HepG2 (cell line): ENCODE measurements at regions of chr1 and their contacts with region 1.

Region 1: DNA sequence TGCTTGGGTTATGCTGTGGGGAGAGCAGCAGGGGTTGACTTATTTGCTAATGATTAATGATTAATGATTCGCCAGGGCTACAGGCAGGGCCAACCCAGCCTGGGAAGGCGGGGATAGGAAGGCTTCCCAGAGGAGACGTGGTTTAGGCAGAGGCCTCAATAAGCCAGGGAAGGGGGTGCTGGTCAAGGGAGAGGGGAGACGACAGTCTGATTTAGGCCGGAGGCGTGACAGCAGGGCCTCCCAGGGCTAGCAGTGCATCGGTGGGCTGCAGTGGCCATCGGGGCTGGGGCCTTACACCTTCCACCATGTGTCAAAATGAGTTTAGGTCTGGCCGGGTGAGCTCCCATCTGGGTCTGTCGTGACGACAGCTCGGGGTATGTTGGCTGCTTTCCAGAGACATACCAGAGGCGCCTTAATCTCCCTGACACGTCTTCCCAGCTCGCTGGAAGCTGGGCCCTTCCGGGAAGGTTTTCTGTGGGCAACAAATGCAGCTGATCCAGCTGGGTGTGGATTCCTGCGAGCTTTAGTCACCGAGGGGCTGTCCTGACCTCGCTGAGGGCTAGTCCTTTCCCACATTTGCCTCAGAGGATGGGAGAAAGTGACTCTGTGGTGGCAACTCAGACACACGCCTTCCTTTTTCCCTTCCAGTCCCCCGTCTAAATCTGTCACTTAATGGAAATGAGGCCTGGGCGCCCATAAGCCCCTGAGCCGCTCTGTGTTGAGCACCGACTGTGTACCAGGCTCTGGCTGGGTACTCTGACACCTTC is 3.7 kb upstream of the SLC1A7 start:
- DNase-seq: peak; percentile 85
- ATAC-seq: peak; percentile 97
- H3K4me3 ChIP-seq: peak overlapping the region; percentile 50 to 70 (median 57); a peak in 5 of 6 replicates
- H3K27ac ChIP-seq: peak overlapping the region; percentile 88
- H3K4me1 ChIP-seq: peaks cover 61% of the 10 kb centered on the region
- H3K27me3 ChIP-seq: peaks cover 0 to 2% of the 10 kb centered on the region in 2 experiments; a peak in 1 of 5 replicates
- CTCF ChIP-seq: peak; percentile 30; the same call in 1 of the 2 replicates
- EP300 ChIP-seq: peak in 1 of 2 experiments; percentile 23; a peak in 1 of 4 replicates
- POLR2A ChIP-seq: peak; percentile 61 to 91
- RAD21 ChIP-seq: 0 out of 2 replicates have a peak, but pooled peaks have one; percentile 36

Region 2: DNA sequence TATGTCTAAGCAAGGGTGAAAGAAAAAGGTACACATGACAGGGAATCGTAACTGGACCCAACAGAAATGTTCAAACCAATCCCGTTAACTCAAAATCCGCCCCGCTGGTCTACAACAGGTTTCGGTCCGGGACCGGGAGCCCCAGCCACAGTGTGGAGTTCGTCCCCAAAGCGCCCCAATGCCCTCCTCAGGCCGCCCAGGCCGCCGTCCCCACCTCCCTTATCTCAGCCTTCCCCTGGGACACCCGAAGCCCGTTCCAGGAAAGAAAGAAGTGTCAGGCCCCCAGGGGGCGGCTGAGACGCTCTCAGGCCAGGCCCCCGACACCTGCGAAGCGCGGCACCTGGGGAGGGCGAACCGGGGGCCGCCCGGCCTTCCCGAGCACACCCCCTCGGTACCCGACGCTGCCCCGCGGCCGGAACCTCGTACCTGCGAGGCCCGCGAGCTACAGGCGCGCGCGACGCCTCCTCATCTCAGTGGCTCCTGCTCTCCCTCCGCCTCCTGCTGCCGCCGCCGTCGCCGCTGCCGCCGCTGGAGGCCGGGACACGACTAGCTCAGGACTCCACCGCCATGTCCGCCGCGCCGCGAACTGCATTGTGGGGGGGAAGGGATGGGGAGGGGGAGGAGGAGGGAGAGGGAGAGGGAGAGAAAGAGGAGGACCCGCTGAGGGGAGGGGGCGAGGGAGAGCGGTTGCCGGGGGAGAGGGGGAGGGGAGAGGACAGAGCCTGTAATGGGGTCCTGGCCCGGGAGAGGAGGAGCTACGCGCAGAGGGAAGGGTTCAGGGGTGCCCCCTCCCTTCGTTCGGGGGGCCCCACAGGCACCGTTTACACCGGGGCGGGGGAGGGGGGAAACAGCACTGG is 593.4 kb before region 1 on chr1 and contains the start of gene TUT4:
- CTCF ChIA-PET with region 1: no interaction called
- POLR2A ChIA-PET with region 1: no interaction called
- in situ Hi-C with region 1: no loop called
- intact Hi-C with region 1: loop called (anchors 10 kb)
- DNase-seq: peak; percentile 79
- ATAC-seq: peak; percentile 79
- H3K4me3 ChIP-seq: peak within 1 kb of the TSS; percentile 90 to 94 (median 93)
- H3K27ac ChIP-seq: peak within 1 kb of the TSS; percentile 95
- H3K4me1 ChIP-seq: peaks cover 40% of the 10 kb centered on the region
- H3K27me3 ChIP-seq: no peaks in the 10 kb centered on the region; a peak in 1 of 5 replicates
- CTCF ChIP-seq: peak; percentile 35
- EP300 ChIP-seq: no peak
- POLR2A ChIP-seq: peak in 1 of 2 experiments; percentile 60; a peak in 2 of 4 replicates
- RAD21 ChIP-seq: peak; percentile 31; the same call in 1 of the 2 replicates
- total RNA-seq, gene TUT4: 44.7 and 47.8 TPM in 2 replicates

Region 3: DNA sequence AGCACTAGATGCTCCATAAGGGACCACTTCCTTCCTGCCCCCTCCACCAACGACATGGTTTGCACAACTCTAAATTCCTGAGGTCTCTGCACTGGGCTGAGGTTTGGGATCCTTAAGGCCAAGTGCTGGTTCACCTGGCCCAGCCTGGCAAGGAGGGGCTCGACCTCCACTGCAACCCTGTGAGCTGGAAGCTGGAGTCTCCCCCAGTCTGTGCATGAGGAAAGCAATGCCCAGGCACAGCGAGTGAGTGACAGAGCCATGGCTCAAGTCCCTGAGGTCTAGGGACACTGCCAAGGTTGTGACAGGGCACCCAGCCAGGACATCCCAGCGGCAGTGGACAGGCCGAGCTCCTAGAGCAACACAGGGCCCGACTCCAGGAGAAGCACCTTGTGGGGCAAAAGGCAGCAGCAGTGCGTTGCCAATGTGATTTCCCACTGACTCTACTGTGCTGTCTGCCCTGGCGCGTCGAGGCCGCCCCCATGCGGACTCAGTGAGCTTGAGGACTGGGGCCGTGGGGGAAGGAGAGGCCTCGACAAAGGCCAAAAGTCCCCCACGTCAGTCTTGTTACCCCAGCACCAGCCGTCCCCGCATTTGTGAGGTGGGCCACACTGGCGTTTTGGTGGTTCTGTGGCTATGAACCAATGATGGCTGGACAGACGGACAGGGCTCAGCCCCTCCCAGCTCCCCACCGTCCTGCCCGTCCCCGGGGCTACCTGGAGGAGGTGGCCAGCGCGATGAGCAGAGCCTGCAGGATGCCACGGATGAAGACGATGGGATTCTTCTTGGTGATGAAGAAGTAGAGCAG is 54.1 kb before region 1 on chr1:
- CTCF ChIA-PET with region 1: no interaction called
- POLR2A ChIA-PET with region 1: interaction called, 11 read pairs
- in situ Hi-C with region 1: no loop called
- intact Hi-C with region 1: no loop called
- DNase-seq: no peak
- ATAC-seq: no peak
- H3K4me3 ChIP-seq: no peak overlapping the region; a peak in 1 of 6 replicates
- H3K27ac ChIP-seq: no peak overlapping the region
- H3K4me1 ChIP-seq: peaks cover 80% of the 10 kb centered on the region
- H3K27me3 ChIP-seq: peaks cover 11 to 26% of the 10 kb centered on the region in 2 experiments; a peak in 4 of 5 replicates
- CTCF ChIP-seq: no peak
- EP300 ChIP-seq: no peak
- POLR2A ChIP-seq: no peak
- RAD21 ChIP-seq: no peak

Region 4: DNA sequence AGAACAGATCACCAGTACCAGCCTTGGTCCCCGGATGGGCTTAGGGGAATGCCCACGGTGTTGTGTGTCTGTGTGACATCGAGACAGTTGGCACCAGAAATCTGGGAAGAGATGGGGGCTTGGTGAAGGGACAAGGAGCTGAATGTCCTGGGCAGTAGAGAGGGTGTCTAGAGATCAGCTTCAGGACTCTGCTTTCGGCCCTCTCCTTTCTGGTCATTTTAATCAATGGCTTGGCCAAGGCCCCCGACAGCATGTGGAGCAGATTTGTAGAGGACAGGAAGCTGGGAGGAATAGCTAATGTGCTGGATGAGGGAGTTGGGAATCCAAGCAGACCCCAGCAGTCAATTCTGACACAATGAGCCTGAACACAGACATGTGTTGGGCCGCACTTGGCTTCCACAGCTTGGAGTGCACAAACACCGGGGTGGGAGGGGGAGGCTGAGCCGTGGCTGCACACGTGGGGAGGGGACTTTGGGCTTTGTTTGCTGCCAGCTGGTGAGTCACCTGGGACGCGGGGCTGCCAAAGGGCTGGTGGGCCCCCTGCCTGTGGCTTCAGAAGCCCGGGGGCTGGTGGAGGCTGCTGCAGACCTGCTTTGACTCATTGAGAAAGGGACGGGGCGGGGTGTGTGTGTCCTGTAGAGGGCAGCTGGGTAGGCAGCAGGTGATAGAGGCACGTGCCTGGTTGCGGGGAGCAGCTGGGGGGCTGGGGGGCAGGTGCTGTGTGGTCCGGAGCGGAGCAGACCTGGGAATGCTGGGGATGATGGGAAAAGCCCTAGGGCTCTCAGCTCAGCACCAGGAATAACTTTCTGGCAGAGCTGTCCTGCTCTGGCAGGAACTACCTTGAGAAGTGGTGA is 24.6 kb before region 1 on chr1:
- CTCF ChIA-PET with region 1: no interaction called
- POLR2A ChIA-PET with region 1: interaction called, 22 read pairs
- in situ Hi-C with region 1: no loop called
- intact Hi-C with region 1: no loop called
- DNase-seq: peak; percentile 83
- ATAC-seq: peak; percentile 83
- H3K4me3 ChIP-seq: peak overlapping the region in 1 of 3 experiments; percentile 58; a peak in 2 of 6 replicates
- H3K27ac ChIP-seq: peak overlapping the region; percentile 55
- H3K4me1 ChIP-seq: peaks cover 84% of the 10 kb centered on the region
- H3K27me3 ChIP-seq: peaks cover 2 to 17% of the 10 kb centered on the region in 2 experiments; a peak in 4 of 5 replicates
- CTCF ChIP-seq: peak; percentile 65
- EP300 ChIP-seq: peak; percentile 27 to 88; a peak in 2 of 4 replicates
- POLR2A ChIP-seq: no peak
- RAD21 ChIP-seq: peak; percentile 32

Region 5: GRCh38 chr1:53127306-53127945 is 18.7 kb before region 1 on chr1:
- CTCF ChIA-PET with region 1: no interaction called
- POLR2A ChIA-PET with region 1: interaction called, 22 read pairs
- in situ Hi-C with region 1: no loop called
- intact Hi-C with region 1: no loop called
- DNase-seq: no peak
- ATAC-seq: peak; percentile 57
- H3K4me3 ChIP-seq: no peak overlapping the region
- H3K27ac ChIP-seq: no peak overlapping the region
- H3K4me1 ChIP-seq: peaks cover 85% of the 10 kb centered on the region
- H3K27me3 ChIP-seq: peaks cover 3 to 5% of the 10 kb centered on the region in 2 experiments; a peak in 3 of 5 replicates
- CTCF ChIP-seq: no peak
- EP300 ChIP-seq: no peak
- POLR2A ChIP-seq: no peak
- RAD21 ChIP-seq: no peak

Region 6: GRCh38 chr1:53165408-53165961 is 19.4 kb after region 1 on chr1:
- CTCF ChIA-PET with region 1: no interaction called
- POLR2A ChIA-PET with region 1: interaction called, 62 read pairs
- in situ Hi-C with region 1: no loop called
- intact Hi-C with region 1: no loop called
- DNase-seq: no peak
- ATAC-seq: no peak
- H3K4me3 ChIP-seq: no peak overlapping the region
- H3K27ac ChIP-seq: no peak overlapping the region
- H3K4me1 ChIP-seq: peaks cover 49% of the 10 kb centered on the region
- H3K27me3 ChIP-seq: no peaks in the 10 kb centered on the region
- CTCF ChIP-seq: no peak
- EP300 ChIP-seq: no peak
- POLR2A ChIP-seq: no peak
- RAD21 ChIP-seq: no peak

Region 7: GRCh38 chr1:53176452-53177208 is 30.5 kb after region 1 on chr1:
- CTCF ChIA-PET with region 1: no interaction called
- POLR2A ChIA-PET with region 1: interaction called, 37 read pairs
- in situ Hi-C with region 1: no loop called
- intact Hi-C with region 1: no loop called
- DNase-seq: no peak
- ATAC-seq: peak; percentile 88
- H3K4me3 ChIP-seq: peak overlapping the region in 2 of 3 experiments; percentile 10 to 18; a peak in 2 of 6 replicates
- H3K27ac ChIP-seq: no peak overlapping the region
- H3K4me1 ChIP-seq: peaks cover 87% of the 10 kb centered on the region
- H3K27me3 ChIP-seq: peaks cover 0 to 4% of the 10 kb centered on the region in 2 experiments; a peak in 2 of 5 replicates
- CTCF ChIP-seq: peak; percentile 94
- EP300 ChIP-seq: peak in 1 of 2 experiments; percentile 10; a peak in 1 of 4 replicates
- POLR2A ChIP-seq: no peak
- RAD21 ChIP-seq: peak; percentile 70

Region 8: GRCh38 chr1:53259932-53260331 is 113.8 kb after region 1 on chr1:
- CTCF ChIA-PET with region 1: no interaction called
- POLR2A ChIA-PET with region 1: no interaction called
- in situ Hi-C with region 1: no loop called
- intact Hi-C with region 1: no loop called
- DNase-seq: no peak
- ATAC-seq: no peak
- H3K4me3 ChIP-seq: no peak overlapping the region
- H3K27ac ChIP-seq: no peak overlapping the region
- H3K4me1 ChIP-seq: no peaks in the 10 kb centered on the region
- H3K27me3 ChIP-seq: no peaks in the 10 kb centered on the region
- CTCF ChIP-seq: no peak
- EP300 ChIP-seq: no peak
- POLR2A ChIP-seq: no peak
- RAD21 ChIP-seq: no peak